ENCODE measurements at regions of chr7 and their contacts with region 1.

Region 1: DNA sequence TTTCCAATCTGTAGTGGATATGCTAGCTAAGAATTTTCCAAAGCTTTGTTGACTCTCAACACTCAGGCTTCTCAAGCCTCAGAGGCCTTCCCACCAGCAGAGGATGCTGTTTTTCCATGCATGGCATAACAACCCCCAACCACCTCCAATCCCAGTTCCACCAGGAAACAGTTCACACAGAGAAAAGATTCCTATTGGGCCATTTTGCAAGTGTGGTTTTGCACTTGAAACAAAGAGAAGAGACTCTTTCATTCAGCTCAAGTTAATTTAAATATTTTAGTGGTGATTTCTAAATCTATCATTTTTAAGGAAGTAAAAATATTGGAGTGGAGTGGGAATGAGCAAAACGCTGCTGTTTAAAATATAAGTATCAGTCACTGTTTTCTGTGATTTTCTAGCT is 105.6 kb upstream of the COL1A2 start:
- DNase-seq: peak in 1 of 2 donors; percentile 36
- ATAC-seq: peak; percentile 69

Region 2: DNA sequence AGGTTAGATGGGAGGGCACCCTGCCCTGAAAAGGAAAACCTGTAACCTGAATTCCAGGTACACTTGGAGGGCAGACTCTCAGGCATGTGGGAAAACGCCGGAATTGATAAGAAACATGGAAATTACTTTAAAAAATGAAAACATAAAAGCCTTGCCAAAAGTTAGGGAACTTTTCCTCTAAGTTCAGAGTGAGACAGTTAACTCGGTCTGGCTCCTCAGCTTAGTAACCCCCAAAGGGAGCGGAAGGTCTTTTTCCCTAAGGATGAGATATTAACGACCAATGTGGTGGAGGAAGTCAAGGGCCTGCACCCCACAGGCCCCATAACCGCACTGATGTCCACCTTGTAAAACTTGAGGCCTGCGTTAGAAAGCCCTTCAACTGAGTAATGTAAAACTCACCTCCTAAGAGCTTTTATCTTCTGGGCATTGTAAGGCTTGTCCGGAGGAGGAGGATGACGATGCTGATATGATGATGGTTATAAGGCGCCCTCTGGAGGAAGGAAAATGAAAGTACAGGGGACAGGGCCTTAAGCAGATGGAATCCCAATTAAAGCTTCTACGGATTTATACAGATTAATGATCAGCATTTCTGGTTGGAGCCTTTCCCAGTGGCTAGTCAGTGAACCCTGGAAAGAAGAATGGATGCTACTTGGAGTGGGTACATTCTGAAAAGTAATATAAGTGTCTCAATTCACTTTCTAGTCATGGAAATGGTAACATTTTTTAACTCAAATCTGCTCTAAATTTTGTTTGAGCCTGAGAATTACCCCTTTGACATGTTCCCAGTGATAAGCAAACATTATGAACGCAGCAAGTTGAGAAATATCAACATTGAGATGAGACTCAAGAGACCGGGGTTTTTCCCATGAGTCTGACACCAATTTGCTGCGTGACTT is 106.3 kb after region 1 on chr7:
- intact Hi-C with region 1: loop called in 1 of 2 experiments (anchors 2 kb)
- DNase-seq: peak; percentile 12 to 35
- ATAC-seq: peak; percentile 64

Region 3: DNA sequence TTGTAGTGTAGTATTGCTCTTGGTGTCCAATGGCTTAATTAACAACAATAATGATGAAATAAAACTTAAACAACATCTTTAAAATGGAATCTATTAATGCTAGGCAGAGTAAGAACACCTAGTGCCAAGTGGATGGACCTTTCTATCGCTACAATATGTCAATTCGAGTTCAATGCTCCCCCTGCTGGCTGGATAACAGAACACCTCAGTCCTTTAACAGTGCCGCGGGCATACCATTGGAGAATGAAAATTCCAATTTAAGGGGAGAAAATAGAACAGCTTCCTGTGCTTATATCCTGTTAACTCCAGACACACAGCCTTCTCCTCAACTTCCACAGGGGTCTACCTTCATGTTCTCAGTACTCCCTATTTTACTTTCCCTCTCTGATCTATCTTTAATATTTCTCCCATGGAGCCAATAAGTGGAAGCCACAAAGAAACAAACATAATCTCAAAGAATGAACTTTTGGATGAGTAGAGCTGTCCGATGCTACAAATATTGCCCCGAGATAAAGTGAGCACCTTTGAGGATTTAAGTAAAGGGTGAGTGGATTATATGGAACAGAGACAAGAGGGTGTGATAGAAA is 147.0 kb after region 1 on chr7:
- intact Hi-C with region 1: loop called in 1 of 2 experiments (anchors 5 kb)
- DNase-seq: peak; percentile 41 to 61
- ATAC-seq: peak; percentile 65